Dendritic cell treated with granulocyte-macrophage colony-stimulating factor and Interleukin-4, amounts not matched to agents 40 ng/mL and 50 ng/mL, for 4 days (primary cell): ENCODE measurements at regions of chr11 and their contacts with region 1.

Region 1: DNA sequence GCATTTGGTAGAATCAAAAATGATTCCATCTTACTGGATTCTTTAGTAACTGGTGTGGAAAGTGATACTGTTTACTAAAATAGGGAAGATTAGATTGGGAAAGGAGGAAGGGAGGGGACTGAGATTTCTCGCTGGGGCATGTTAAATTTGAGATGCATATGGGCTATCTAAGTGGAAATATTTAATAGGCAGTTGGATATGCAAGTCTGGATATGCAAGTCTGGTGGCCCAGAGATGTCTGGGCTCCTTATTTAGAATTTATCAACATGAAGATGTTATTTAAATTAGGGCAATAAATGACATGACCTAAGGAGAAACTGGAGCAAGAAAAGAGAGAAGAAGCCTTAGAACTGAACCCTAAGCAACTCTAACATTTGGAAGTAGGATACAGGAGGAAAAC is 17.0 kb upstream of the TBCEL start:
- H3K4me3 Mint-ChIP-seq: no peak overlapping the region
- H3K27ac Mint-ChIP-seq: no peak overlapping the region
- H3K4me1 Mint-ChIP-seq: no peaks in the 10 kb centered on the region
- H3K27me3 Mint-ChIP-seq: peaks cover 12% of the 10 kb centered on the region

Region 2: GRCh38 chr11:119907878-119908572 is 1098.9 kb before region 1 on chr11:
- intact Hi-C with region 1: no loop called
- H3K4me3 Mint-ChIP-seq: no peak overlapping the region
- H3K27ac Mint-ChIP-seq: no peak overlapping the region
- H3K4me1 Mint-ChIP-seq: no peaks in the 10 kb centered on the region
- H3K27me3 Mint-ChIP-seq: peaks cover 14% of the 10 kb centered on the region

Region 3: GRCh38 chr11:120792306-120792705 is 214.6 kb before region 1 on chr11:
- intact Hi-C with region 1: no loop called
- H3K4me3 Mint-ChIP-seq: no peak overlapping the region
- H3K27ac Mint-ChIP-seq: no peak overlapping the region
- H3K4me1 Mint-ChIP-seq: no peaks in the 10 kb centered on the region
- H3K27me3 Mint-ChIP-seq: peaks cover 2% of the 10 kb centered on the region

Region 4: GRCh38 chr11:120994091-120994859 is 12.6 kb before region 1 on chr11:
- intact Hi-C with region 1: loop called (anchors 1 kb)
- H3K4me3 Mint-ChIP-seq: no peak overlapping the region
- H3K27ac Mint-ChIP-seq: no peak overlapping the region
- H3K4me1 Mint-ChIP-seq: no peaks in the 10 kb centered on the region
- H3K27me3 Mint-ChIP-seq: peaks cover 10% of the 10 kb centered on the region